ENCODE measurements at regions of chr2 and their contacts with region 1.

Region 1: GRCh38 chr2:127591221-127591923 is 54.6 kb upstream of the GPR17 start:
- DNase-seq: peak in 34 of 35 experiments; percentile 19 to 79 (median 55)
- ATAC-seq: peak; percentile 89 to 99 (median 92)
- H3K4me3 ChIP-seq: no peak overlapping the region
- H3K4me3 Mint-ChIP-seq: no peak overlapping the region
- H3K27ac ChIP-seq: no peak overlapping the region
- H3K27ac Mint-ChIP-seq: peak overlapping the region in 1 of 2 donors; percentile 65
- H3K4me1 ChIP-seq: peaks cover 0 to 5% of the 10 kb centered on the region in 2 experiments
- H3K4me1 Mint-ChIP-seq: peaks cover 0 to 6% (median 5%) of the 10 kb centered on the region in 3 donors
- H3K27me3 ChIP-seq: peaks cover 0 to 2% of the 10 kb centered on the region in 2 experiments
- H3K27me3 Mint-ChIP-seq: no peaks in the 10 kb centered on the region

Region 2: DNA sequence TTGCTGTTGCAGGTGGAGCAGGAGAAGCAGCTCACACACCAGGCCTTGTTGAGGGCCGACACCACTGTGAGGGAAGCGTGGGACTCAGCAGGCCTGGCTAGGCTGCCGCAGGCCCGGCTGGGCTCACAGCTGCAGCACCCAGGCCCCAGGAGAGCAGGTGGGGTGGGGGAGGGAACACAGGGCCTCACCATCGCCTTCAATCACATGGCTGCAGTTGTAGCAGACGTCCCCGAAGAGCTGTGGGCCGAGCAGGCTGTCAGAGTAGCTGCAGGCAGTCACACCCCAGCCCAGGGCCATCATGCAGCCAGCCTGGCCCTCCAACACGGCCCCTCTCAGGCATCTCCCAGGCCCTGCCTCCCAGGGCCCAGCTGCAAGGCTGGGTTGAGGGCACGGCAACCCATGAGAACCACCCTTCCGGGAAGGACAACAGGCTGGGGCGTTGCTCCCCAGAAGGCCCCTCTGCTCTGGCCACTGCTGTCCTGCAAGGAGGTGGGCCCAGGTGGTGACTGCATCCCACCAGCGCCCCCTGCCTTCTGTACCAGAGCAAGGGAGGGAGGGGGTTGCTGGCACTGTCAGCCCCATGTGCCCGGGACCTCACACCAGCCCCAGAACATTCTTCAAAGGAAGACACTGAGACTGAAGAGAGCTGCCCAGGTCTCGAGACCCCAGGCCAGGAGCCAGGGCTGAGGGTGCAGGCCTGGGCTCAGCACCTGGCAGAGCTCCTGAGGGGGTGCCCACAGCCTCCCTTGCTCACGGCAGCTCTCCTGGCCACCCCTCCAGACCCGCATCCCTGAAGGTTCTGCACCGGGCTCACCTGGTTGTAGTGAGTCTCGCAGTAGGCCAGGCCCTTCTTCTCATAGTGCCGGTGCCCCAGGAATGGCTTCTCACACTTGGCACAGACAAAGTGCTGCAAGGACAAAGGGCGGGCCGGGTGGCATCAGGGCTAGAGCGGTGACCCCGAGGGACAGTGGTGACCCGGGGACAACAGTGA is 49.0 kb after region 1 on chr2:
- CTCF ChIA-PET with region 1: interaction called, 5 to 10 read pairs
- POLR2A ChIA-PET with region 1: interaction called in 1 of 2 experiments, 3 read pairs
- DNase-seq: peak in 13 of 35 experiments; percentile 8 to 47 (median 25)
- ATAC-seq: peak; percentile 6 to 23 (median 15)
- H3K4me3 ChIP-seq: peak overlapping the region; percentile 51 to 56
- H3K4me3 Mint-ChIP-seq: peak overlapping the region; percentile 44 to 75 (median 65)
- H3K27ac ChIP-seq: peak overlapping the region; percentile 70
- H3K27ac Mint-ChIP-seq: peak overlapping the region; percentile 87 to 90
- H3K4me1 ChIP-seq: peaks cover 52 to 81% of the 10 kb centered on the region in 2 experiments
- H3K4me1 Mint-ChIP-seq: peaks cover 53 to 62% (median 53%) of the 10 kb centered on the region in 3 donors
- H3K27me3 ChIP-seq: peaks cover 0 to 2% of the 10 kb centered on the region in 2 experiments
- H3K27me3 Mint-ChIP-seq: no peaks in the 10 kb centered on the region

Region 3: DNA sequence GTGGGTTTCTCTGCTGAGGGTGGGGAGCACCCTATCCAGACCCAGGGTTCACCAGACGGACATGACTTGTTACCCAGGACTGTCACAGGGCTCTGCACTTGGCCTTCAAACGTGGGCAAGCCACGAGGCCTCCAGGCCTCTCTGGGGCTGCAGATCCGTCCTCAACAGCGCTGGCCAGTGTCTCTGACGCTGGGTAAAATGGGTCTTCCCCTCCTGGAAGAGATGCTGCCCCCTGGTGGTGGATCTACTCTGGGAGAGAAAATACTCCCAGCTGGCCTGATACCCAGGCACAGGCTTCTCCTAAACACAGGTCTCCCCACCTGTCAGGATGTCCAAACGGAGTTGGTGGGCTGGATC is 58.3 kb after region 1 on chr2:
- CTCF ChIA-PET with region 1: interaction called, 35 to 39 read pairs
- POLR2A ChIA-PET with region 1: interaction called in 1 of 2 experiments, 3 read pairs
- DNase-seq: peak; percentile 45 to 91 (median 77)
- ATAC-seq: peak; percentile 75 to 83 (median 79)
- H3K4me3 ChIP-seq: no peak overlapping the region
- H3K4me3 Mint-ChIP-seq: peak overlapping the region in 2 of 3 donors; percentile 44 to 72
- H3K27ac ChIP-seq: no peak overlapping the region
- H3K27ac Mint-ChIP-seq: peak overlapping the region; percentile 78 to 91
- H3K4me1 ChIP-seq: peaks cover 8 to 29% of the 10 kb centered on the region in 2 experiments
- H3K4me1 Mint-ChIP-seq: peaks cover 12 to 28% (median 25%) of the 10 kb centered on the region in 3 donors
- H3K27me3 ChIP-seq: peaks cover 0 to 13% of the 10 kb centered on the region in 2 experiments
- H3K27me3 Mint-ChIP-seq: peaks cover 0 to 3% of the 10 kb centered on the region in 2 donors